Activated CD4-positive, alpha-beta T cell treated with anti-CD3 and anti-CD28 coated beads, Interleukin-2, amount 10 ng/mL, durations not matched to agents 7 days and 5 days (primary cell): ENCODE measurements at regions of chr4 and their contacts with region 1.

Region 1: GRCh38 chr4:184893801-184894571 is 68.2 kb upstream of the ACSL1 start:
- DNase-seq: no peak
- H3K4me3 Mint-ChIP-seq: no peak overlapping the region
- H3K27ac Mint-ChIP-seq: no peak overlapping the region
- H3K4me1 Mint-ChIP-seq: peaks cover 6% of the 10 kb centered on the region
- H3K27me3 Mint-ChIP-seq: peaks cover 21% of the 10 kb centered on the region

Region 2: GRCh38 chr4:184882271-184882670 is 11.7 kb before region 1 on chr4:
- CTCF ChIA-PET with region 1: interaction called, 10 read pairs
- POLR2A ChIA-PET with region 1: no interaction called
- DNase-seq: no peak
- H3K4me3 Mint-ChIP-seq: no peak overlapping the region
- H3K27ac Mint-ChIP-seq: no peak overlapping the region
- H3K4me1 Mint-ChIP-seq: no peaks in the 10 kb centered on the region
- H3K27me3 Mint-ChIP-seq: peaks cover 2% of the 10 kb centered on the region

Region 3: DNA sequence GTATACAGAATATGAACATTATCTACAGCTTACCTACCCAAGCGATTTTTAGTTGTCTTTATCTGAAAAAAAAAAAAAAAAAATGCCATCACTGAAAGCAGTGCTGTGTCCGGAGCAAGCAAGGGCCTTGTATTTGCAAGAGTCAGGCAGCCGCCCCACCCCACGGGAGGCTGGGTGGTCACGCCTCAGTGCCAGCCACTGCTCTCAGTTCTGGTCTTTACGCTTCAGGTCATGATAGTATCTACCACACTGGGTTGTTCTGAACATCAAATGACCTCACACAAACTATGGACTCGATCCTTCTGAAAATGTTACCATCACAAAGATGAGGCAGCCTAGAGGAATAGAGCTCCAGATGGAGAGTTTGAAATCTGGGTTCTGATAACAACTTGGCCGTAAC is 61.7 kb after region 1 on chr4:
- CTCF ChIA-PET with region 1: no interaction called
- POLR2A ChIA-PET with region 1: no interaction called
- DNase-seq: no peak
- H3K4me3 Mint-ChIP-seq: no peak overlapping the region
- H3K27ac Mint-ChIP-seq: no peak overlapping the region
- H3K4me1 Mint-ChIP-seq: peaks cover 3% of the 10 kb centered on the region
- H3K27me3 Mint-ChIP-seq: no peaks in the 10 kb centered on the region